CD4-positive, alpha-beta T cell (primary cell): ENCODE measurements at regions of chr18 and their contacts with region 1.

Region 1: GRCh38 chr18:3447895-3448837 is 1.8 kb upstream of the TGIF1 start:
- DNase-seq: peak; percentile 74 to 95 (median 84)
- ATAC-seq: peak; percentile 52
- H3K4me3 ChIP-seq: peak overlapping the region; percentile 90
- H3K4me3 Mint-ChIP-seq: peak overlapping the region; percentile 95
- H3K27ac ChIP-seq: peak overlapping the region; percentile 94 to 98
- H3K27ac Mint-ChIP-seq: peak overlapping the region; percentile 99
- H3K4me1 ChIP-seq: peaks cover 48% of the 10 kb centered on the region
- H3K4me1 Mint-ChIP-seq: peaks cover 47% of the 10 kb centered on the region
- H3K27me3 ChIP-seq: no peaks in the 10 kb centered on the region
- H3K27me3 Mint-ChIP-seq: peaks cover 5% of the 10 kb centered on the region
- CTCF ChIP-seq: no peak

Region 2: GRCh38 chr18:2898186-2898640 is 550.0 kb before region 1 on chr18:
- CTCF ChIA-PET with region 1: no interaction called
- POLR2A ChIA-PET with region 1: no interaction called
- intact Hi-C with region 1: no loop called
- DNase-seq: peak in 2 of 14 experiments; percentile 29 to 54
- ATAC-seq: no peak
- H3K4me3 ChIP-seq: no peak overlapping the region
- H3K4me3 Mint-ChIP-seq: no peak overlapping the region
- H3K27ac ChIP-seq: no peak overlapping the region
- H3K27ac Mint-ChIP-seq: no peak overlapping the region
- H3K4me1 ChIP-seq: peaks cover 31% of the 10 kb centered on the region
- H3K4me1 Mint-ChIP-seq: peaks cover 6% of the 10 kb centered on the region
- H3K27me3 ChIP-seq: no peaks in the 10 kb centered on the region
- H3K27me3 Mint-ChIP-seq: no peaks in the 10 kb centered on the region
- CTCF ChIP-seq: no peak

Region 3: DNA sequence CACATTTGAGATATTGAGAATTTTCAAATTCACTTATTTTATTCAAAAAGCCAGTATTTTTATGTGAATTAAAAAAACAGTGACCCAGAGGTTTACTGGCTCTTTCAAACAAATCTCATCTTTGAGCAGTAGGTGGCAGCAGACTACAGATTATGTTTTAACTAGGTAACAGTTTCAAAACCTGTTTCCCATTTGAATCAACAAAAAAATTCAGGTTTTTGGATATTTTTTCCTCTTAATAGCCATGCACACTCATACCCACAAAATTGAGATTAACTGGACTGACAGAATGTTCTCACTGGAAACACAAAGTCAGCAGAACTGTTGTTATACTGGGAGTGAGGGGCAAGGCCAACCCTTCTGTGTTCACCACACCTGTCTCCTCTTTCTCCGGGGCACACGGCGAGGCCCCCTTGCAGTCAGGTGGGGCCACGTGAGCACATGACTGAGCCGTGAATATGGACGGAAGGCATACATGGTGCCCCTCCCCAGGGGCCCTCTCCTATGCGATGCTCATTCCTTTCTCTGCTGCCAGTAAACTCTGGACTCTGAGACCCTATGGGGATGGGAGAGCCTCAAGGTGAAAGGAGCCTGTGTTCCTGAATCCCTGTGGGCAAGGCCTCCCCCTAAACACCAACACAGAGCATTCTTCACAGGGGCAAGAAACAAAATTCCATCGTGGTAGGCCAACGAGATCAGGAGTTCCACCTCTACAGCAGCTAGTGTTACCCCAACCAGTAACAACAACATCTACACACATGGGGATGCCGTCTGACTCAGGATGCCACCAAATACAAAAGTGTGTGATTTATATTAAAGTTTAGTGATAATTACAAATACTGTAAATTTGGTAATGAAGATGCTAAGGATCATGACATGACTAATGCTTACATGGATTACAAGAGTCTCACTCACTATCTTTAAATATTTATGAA is 515.7 kb before region 1 on chr18:
- CTCF ChIA-PET with region 1: no interaction called
- POLR2A ChIA-PET with region 1: no interaction called
- intact Hi-C with region 1: loop called in 1 of 2 experiments (anchors 10 kb)
- DNase-seq: peak in 8 of 14 experiments; percentile 13 to 84 (median 51)
- ATAC-seq: peak; percentile 80
- H3K4me3 ChIP-seq: no peak overlapping the region
- H3K4me3 Mint-ChIP-seq: no peak overlapping the region
- H3K27ac ChIP-seq: peak overlapping the region; percentile 18 to 51
- H3K27ac Mint-ChIP-seq: peak overlapping the region; percentile 67
- H3K4me1 ChIP-seq: peaks cover 9% of the 10 kb centered on the region
- H3K4me1 Mint-ChIP-seq: peaks cover 36% of the 10 kb centered on the region
- H3K27me3 ChIP-seq: no peaks in the 10 kb centered on the region
- H3K27me3 Mint-ChIP-seq: no peaks in the 10 kb centered on the region
- CTCF ChIP-seq: peak; percentile 92

Region 4: DNA sequence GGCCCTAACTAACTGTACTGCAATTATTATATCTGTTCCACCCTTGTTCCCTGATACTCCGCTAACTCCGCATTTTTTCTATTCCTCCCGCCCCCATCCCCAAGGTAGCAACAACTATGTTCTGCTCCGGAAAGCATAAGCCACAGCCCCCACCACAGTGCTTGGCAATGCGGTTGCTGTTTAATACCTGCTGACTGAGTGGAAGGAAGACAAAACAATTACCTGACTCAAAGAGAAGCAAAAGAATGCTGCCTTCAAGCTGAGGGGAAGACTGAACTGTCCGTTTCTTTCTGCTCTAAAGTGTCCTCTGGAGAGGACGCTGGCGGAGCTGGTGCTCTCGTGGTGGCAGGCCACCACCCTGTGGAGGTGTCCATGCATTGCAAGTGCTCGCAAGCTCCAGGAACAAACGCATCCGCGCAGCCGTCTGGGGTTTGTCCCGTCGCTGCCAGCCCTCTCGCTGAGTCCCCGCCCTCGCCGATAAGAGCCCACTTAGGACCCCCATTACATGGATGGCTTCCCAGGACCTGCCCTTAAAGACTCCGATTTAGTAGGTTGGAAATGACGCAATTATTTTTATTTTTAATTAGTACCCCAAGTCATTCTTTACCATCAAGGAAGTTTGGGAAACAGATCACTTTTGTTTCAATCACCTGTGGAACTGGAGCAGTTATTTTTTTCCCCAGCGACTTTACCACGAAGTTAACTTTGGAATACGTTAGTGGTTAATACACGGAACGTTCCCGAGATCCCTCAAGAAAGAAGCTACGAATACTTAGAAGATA is 202.1 kb before region 1 on chr18:
- CTCF ChIA-PET with region 1: no interaction called
- POLR2A ChIA-PET with region 1: interaction called, 109 read pairs
- intact Hi-C with region 1: no loop called
- DNase-seq: peak; percentile 57 to 89 (median 70)
- ATAC-seq: peak; percentile 57
- H3K4me3 ChIP-seq: peak overlapping the region; percentile 84
- H3K4me3 Mint-ChIP-seq: peak overlapping the region; percentile 93
- H3K27ac ChIP-seq: peak overlapping the region; percentile 84 to 92
- H3K27ac Mint-ChIP-seq: peak overlapping the region; percentile 100
- H3K4me1 ChIP-seq: peaks cover 32% of the 10 kb centered on the region
- H3K4me1 Mint-ChIP-seq: peaks cover 29% of the 10 kb centered on the region
- H3K27me3 ChIP-seq: no peaks in the 10 kb centered on the region
- H3K27me3 Mint-ChIP-seq: no peaks in the 10 kb centered on the region
- CTCF ChIP-seq: peak; percentile 72

Region 5: GRCh38 chr18:3297025-3297984 is 150.9 kb before region 1 on chr18:
- CTCF ChIA-PET with region 1: interaction called, 24 read pairs
- POLR2A ChIA-PET with region 1: interaction called, 41 read pairs
- intact Hi-C with region 1: loop called (anchors 2 to 5 kb)
- DNase-seq: peak; percentile 88 to 96 (median 92)
- ATAC-seq: peak; percentile 96
- H3K4me3 ChIP-seq: peak overlapping the region; percentile 65
- H3K4me3 Mint-ChIP-seq: peak overlapping the region; percentile 91
- H3K27ac ChIP-seq: no peak overlapping the region
- H3K27ac Mint-ChIP-seq: peak overlapping the region; percentile 79
- H3K4me1 ChIP-seq: peaks cover 11% of the 10 kb centered on the region
- H3K4me1 Mint-ChIP-seq: peaks cover 11% of the 10 kb centered on the region
- H3K27me3 ChIP-seq: peaks cover 0 to 15% of the 10 kb centered on the region in 2 experiments
- H3K27me3 Mint-ChIP-seq: peaks cover 35% of the 10 kb centered on the region
- CTCF ChIP-seq: peak; percentile 80

Region 6: DNA sequence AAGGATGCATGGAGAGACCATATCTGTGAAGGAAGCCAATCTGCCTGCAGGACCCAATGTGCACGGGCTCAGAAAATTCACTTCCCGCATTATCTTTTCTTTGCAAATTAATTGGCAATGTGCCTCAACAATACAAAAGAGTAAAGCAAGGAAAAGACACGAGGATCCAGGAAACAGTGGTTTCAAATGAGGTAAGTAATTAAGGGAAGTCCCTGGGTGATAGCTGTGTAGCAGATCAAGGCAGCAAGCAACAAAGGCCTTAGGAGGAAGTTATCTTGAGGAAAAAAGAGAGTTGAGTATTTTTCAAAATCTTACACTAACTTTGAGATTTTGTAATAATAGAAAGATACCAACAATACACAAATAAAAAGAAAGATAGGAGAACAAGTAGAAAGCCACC is 42.5 kb before region 1 on chr18:
- CTCF ChIA-PET with region 1: no interaction called
- POLR2A ChIA-PET with region 1: interaction called, 11 read pairs
- intact Hi-C with region 1: no loop called
- DNase-seq: peak in 2 of 14 experiments; percentile 22 to 34
- ATAC-seq: no peak
- H3K4me3 ChIP-seq: no peak overlapping the region
- H3K4me3 Mint-ChIP-seq: no peak overlapping the region
- H3K27ac ChIP-seq: no peak overlapping the region
- H3K27ac Mint-ChIP-seq: peak overlapping the region; percentile 8
- H3K4me1 ChIP-seq: peaks cover 4% of the 10 kb centered on the region
- H3K4me1 Mint-ChIP-seq: peaks cover 25% of the 10 kb centered on the region
- H3K27me3 ChIP-seq: no peaks in the 10 kb centered on the region
- H3K27me3 Mint-ChIP-seq: no peaks in the 10 kb centered on the region
- CTCF ChIP-seq: no peak

Region 7: GRCh38 chr18:3585656-3586509 is 137.7 kb after region 1 on chr18:
- CTCF ChIA-PET with region 1: interaction called, 8 read pairs
- POLR2A ChIA-PET with region 1: interaction called, 14 read pairs
- intact Hi-C with region 1: no loop called
- DNase-seq: peak; percentile 48 to 85 (median 60)
- ATAC-seq: peak; percentile 86
- H3K4me3 ChIP-seq: no peak overlapping the region
- H3K4me3 Mint-ChIP-seq: no peak overlapping the region
- H3K27ac ChIP-seq: no peak overlapping the region
- H3K27ac Mint-ChIP-seq: no peak overlapping the region
- H3K4me1 ChIP-seq: peaks cover 11% of the 10 kb centered on the region
- H3K4me1 Mint-ChIP-seq: peaks cover 12% of the 10 kb centered on the region
- H3K27me3 ChIP-seq: no peaks in the 10 kb centered on the region
- H3K27me3 Mint-ChIP-seq: no peaks in the 10 kb centered on the region
- CTCF ChIP-seq: peak; percentile 77

Region 8: GRCh38 chr18:3665780-3666525 is 217.8 kb after region 1 on chr18:
- CTCF ChIA-PET with region 1: interaction called, 3 read pairs
- POLR2A ChIA-PET with region 1: interaction called, 14 read pairs
- intact Hi-C with region 1: loop called in 1 of 2 experiments (anchors 5 kb)
- DNase-seq: peak; percentile 48 to 86 (median 70)
- ATAC-seq: peak; percentile 88
- H3K4me3 ChIP-seq: peak overlapping the region; percentile 19
- H3K4me3 Mint-ChIP-seq: no peak overlapping the region
- H3K27ac ChIP-seq: no peak overlapping the region
- H3K27ac Mint-ChIP-seq: no peak overlapping the region
- H3K4me1 ChIP-seq: peaks cover 7% of the 10 kb centered on the region
- H3K4me1 Mint-ChIP-seq: peaks cover 7% of the 10 kb centered on the region
- H3K27me3 ChIP-seq: no peaks in the 10 kb centered on the region
- H3K27me3 Mint-ChIP-seq: no peaks in the 10 kb centered on the region
- CTCF ChIP-seq: peak; percentile 94